Right ventricle myocardium superior (tissue), 1 donor: ENCODE measurements at regions of chr14 and their contacts with region 1.

Region 1: GRCh38 chr14:99793213-99794150 is at the start of gene EML1:
- DNase-seq: peak; percentile 89
- ATAC-seq: peak; percentile 92
- total RNA-seq, gene EML1: 39.5 TPM

Region 2: DNA sequence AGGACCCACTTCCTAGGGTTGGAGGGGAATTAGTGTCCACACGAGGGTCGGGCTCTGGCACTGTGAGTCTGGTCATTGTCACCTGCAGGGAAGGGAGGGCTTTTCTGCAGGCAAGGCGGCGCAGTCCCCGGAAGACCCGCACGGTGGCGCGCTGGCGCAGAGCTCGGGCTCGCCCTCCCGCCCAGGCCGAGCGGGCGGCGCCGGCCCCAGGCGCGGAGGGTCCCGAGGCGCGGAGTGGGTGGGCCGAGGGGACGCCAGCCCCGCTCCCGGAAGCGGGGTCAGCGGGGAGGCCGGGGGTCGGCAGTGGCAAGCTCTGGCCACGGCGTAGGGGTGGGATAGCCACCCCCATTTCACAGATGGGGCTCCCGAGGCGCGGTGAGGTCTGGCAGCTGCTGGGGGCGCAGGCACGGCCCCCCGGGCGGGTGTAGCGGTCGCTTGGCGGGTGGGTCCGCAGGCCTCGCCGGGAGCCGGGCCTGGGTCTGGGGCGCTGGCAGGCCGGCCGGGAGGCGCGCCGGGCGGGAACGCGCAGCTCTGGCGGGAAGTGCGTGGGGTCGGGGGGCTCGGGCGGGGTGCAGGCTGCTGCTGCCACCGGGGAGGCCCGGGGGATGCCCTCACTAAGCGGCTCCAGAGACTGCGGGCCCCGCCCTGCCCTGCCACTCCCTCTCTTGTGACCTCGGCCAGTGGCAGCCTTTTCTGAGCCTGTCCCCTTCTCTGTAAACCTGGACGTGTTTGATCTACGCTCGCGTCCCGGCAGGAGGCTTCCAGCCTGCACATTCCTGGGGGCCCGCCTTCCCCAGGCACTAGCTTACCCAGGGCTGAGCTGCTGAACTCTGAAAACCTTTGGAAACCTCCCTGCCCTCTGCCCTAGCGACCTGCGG is 63.3 kb before region 1 on chr14:
- intact Hi-C with region 1: loop called (anchors 5 kb)
- DNase-seq: peak; percentile 85
- ATAC-seq: peak; percentile 80

Region 3: GRCh38 chr14:99910337-99911309 is 117.1 kb after region 1 on chr14:
- intact Hi-C with region 1: no loop called
- DNase-seq: no peak
- ATAC-seq: no peak